Activated CD8-positive, alpha-beta T cell treated with anti-CD3 and anti-CD28 coated beads for 36 hours (primary cell): ENCODE measurements at regions of chr19 and their contacts with region 1.

Region 1: GRCh38 chr19:18588611-18589379 is at the start of gene REX1BD:
- DNase-seq: peak; percentile 94
- ATAC-seq: peak; percentile 75
- H3K4me3 Mint-ChIP-seq: peak within 1 kb of the TSS; percentile 82
- H3K27ac Mint-ChIP-seq: peak within 1 kb of the TSS; percentile 90
- H3K4me1 Mint-ChIP-seq: peaks cover 32% of the 10 kb centered on the region
- H3K27me3 Mint-ChIP-seq: no peaks in the 10 kb centered on the region
- CTCF ChIP-seq: peak; percentile 88
- total RNA-seq, gene REX1BD: 61.2 to 65.1 TPM

Region 2: GRCh38 chr19:18450931-18451845 is 137.6 kb before region 1 on chr19:
- CTCF ChIA-PET with region 1: interaction called, 12 read pairs
- POLR2A ChIA-PET with region 1: no interaction called
- intact Hi-C with region 1: no loop called
- DNase-seq: peak; percentile 94
- ATAC-seq: peak; percentile 99
- H3K4me3 Mint-ChIP-seq: no peak overlapping the region
- H3K27ac Mint-ChIP-seq: no peak overlapping the region
- H3K4me1 Mint-ChIP-seq: peaks cover 4% of the 10 kb centered on the region
- H3K27me3 Mint-ChIP-seq: no peaks in the 10 kb centered on the region
- CTCF ChIP-seq: peak; percentile 98

Region 3: GRCh38 chr19:18542936-18543815 is 45.6 kb before region 1 on chr19 and contains the start of gene FKBP8:
- CTCF ChIA-PET with region 1: interaction called, 6 read pairs
- POLR2A ChIA-PET with region 1: interaction called, 16 read pairs
- intact Hi-C with region 1: no loop called
- DNase-seq: peak; percentile 97
- ATAC-seq: peak; percentile 96
- H3K4me3 Mint-ChIP-seq: peak within 1 kb of the TSS; percentile 90
- H3K27ac Mint-ChIP-seq: peak within 1 kb of the TSS; percentile 98
- H3K4me1 Mint-ChIP-seq: peaks cover 22% of the 10 kb centered on the region
- H3K27me3 Mint-ChIP-seq: no peaks in the 10 kb centered on the region
- CTCF ChIP-seq: no peak
- total RNA-seq, gene FKBP8: 216 to 220 TPM

Region 4: DNA sequence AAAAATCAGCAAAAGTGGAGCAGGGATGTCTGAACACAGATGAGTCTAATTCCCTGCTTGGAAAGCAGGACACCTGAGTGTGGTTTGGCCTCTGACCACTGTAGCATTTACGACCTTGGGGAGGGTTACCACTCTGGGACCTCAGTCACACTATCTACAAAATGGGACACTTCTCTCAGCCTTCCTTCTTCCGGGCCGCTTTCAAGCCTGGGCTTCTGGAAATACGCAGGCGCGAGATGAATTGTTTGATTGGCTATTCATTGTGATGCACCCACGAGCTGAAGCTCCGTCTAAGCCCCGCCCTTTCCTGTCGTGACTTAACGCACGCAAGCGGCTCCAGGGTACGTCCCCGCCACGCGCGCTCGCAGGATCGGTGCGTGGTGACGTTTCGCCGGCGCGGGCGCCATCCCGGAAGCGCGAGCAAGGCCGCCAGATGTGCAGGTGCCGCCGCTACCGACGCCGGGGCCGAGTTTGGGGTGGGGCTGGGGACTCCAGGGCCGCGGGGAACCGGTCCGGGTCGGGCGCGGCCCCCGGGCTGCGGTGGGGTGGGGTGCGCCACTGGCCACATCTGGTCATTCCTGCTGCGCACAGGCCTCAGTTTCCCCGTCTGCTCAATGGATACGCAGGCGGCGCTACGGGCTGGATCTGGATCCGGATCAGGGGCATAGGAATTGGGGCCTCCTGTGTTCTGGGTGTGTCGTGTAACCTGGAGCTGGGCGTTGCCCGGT is 31.2 kb before region 1 on chr19 and contains the start of gene KXD1:
- CTCF ChIA-PET with region 1: interaction called, 20 read pairs
- POLR2A ChIA-PET with region 1: interaction called, 4 read pairs
- intact Hi-C with region 1: no loop called
- DNase-seq: peak; percentile 99
- ATAC-seq: peak; percentile 99
- H3K4me3 Mint-ChIP-seq: peak within 1 kb of the TSS; percentile 90
- H3K27ac Mint-ChIP-seq: peak within 1 kb of the TSS; percentile 95
- H3K4me1 Mint-ChIP-seq: peaks cover 15% of the 10 kb centered on the region
- H3K27me3 Mint-ChIP-seq: no peaks in the 10 kb centered on the region
- CTCF ChIP-seq: no peak
- total RNA-seq, gene KXD1: 137 to 142 TPM

Region 5: GRCh38 chr19:18571564-18572300 is 17.1 kb before region 1 on chr19 and contains the start of gene UBA52:
- CTCF ChIA-PET with region 1: interaction called, 37 read pairs
- POLR2A ChIA-PET with region 1: interaction called, 51 read pairs
- intact Hi-C with region 1: no loop called
- DNase-seq: peak; percentile 99
- ATAC-seq: peak; percentile 92
- H3K4me3 Mint-ChIP-seq: peak within 1 kb of the TSS; percentile 87
- H3K27ac Mint-ChIP-seq: peak within 1 kb of the TSS; percentile 91
- H3K4me1 Mint-ChIP-seq: peaks cover 29% of the 10 kb centered on the region
- H3K27me3 Mint-ChIP-seq: no peaks in the 10 kb centered on the region
- CTCF ChIP-seq: no peak
- total RNA-seq, gene UBA52: 1,795 to 1,837 TPM

Region 6: DNA sequence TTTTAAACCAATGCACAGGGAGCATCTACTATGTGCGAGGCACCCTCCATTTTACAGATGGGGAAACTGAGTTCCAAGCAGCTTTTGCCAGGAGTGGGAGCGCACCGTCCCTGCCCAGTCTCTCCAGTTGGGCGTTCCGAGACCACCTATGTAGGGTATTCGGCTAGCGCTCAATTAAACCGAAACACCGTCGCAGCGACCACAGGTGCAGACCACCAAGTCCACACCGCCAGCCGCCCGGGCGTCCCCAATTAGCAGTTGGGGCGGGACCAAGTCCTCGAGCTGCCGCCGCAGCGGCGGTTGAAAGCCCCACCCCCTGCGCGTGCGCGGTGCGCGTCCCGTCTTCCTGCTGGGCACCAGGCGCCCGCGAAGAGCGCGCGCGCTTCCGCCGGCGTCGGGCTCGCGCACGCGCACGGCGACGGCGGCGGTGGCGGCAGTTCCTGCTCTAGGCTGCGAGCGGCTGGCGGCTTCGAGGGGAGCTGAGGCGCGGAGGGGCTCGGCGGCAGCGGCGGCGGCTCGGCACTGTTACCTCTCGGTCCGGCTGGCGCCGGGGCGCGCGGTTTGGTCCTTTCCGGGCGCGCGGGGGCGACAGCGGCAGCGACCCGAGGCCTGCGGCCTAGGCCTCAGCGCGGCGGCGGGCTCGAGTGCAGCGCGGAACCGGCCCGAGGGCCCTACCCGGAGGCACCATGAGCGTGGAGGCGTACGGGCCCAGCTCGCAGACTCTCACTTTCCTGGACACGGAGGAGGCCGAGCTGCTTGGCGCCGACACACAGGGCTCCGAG is 242.9 kb after region 1 on chr19 and contains the start of gene UPF1:
- CTCF ChIA-PET with region 1: interaction called, 5 read pairs
- POLR2A ChIA-PET with region 1: interaction called, 10 read pairs
- intact Hi-C with region 1: no loop called
- DNase-seq: peak; percentile 96
- ATAC-seq: peak; percentile 86
- H3K4me3 Mint-ChIP-seq: peak within 1 kb of the TSS; percentile 97
- H3K27ac Mint-ChIP-seq: peak within 1 kb of the TSS; percentile 91
- H3K4me1 Mint-ChIP-seq: peaks cover 30% of the 10 kb centered on the region
- H3K27me3 Mint-ChIP-seq: no peaks in the 10 kb centered on the region
- CTCF ChIP-seq: no peak
- total RNA-seq, gene UPF1: 75.9 to 87.6 TPM

Region 7: DNA sequence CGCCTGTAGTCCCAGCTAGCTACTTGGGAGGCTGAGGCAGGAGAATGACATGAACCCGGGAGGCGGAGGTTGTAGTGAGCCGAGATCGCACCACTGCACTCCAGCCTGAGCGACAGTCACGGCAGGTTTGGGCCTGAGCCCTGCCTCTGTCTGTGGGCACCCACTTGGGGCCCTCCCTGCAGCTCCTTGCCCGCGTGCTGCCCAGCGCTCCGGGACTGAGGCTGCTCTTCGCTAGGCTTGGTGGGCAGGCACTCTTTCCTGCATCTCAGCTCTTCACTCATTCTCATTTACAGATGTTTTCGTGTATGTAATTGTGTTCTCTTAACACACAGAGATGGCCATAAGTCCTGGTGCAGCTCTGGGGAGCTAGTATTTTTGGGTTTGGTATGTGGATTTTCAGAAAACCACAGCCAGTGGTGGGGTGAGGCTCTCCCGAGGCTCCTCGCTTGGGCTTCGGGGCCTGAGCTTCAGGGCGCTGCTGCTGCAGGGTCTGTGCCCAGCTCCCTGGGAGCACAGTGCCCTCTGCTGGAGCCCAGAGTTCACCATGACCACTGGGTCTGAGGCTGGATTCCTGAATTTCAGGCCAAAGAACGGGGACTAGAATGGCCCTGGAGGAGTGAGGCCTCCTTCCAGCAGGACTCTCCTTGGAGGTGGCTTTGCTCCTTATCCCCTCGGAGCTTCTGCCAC is 258.2 kb after region 1 on chr19:
- CTCF ChIA-PET with region 1: interaction called, 28 read pairs
- POLR2A ChIA-PET with region 1: interaction called, 3 read pairs
- intact Hi-C with region 1: loop called (anchors 10 kb)
- DNase-seq: peak; percentile 81
- ATAC-seq: peak; percentile 74
- H3K4me3 Mint-ChIP-seq: no peak overlapping the region
- H3K27ac Mint-ChIP-seq: peak overlapping the region; percentile 16
- H3K4me1 Mint-ChIP-seq: peaks cover 64% of the 10 kb centered on the region
- H3K27me3 Mint-ChIP-seq: no peaks in the 10 kb centered on the region
- CTCF ChIP-seq: peak; percentile 77